Heart right ventricle (tissue), 16 donors: ENCODE measurements at regions of chr14 and their contacts with region 1.

Region 1: GRCh38 chr14:102497998-102498677 is 11.4 kb downstream of the ANKRD9 start:
- DNase-seq: peak in 1 of 2 donors; percentile 36
- ATAC-seq: peak in 2 of 8 donors; percentile 1 to 15
- H3K4me3 ChIP-seq: no peak overlapping the region
- H3K27ac ChIP-seq: peak overlapping the region in 9 of 10 donors; percentile 26 to 96 (median 89)
- H3K4me1 ChIP-seq: peaks cover 9 to 54% (median 26%) of the 10 kb centered on the region in 9 donors
- H3K27me3 ChIP-seq: no peaks in the 10 kb centered on the region
- CTCF ChIP-seq: peak in 5 of 9 donors; percentile 13 to 36 (median 26)

Region 2: DNA sequence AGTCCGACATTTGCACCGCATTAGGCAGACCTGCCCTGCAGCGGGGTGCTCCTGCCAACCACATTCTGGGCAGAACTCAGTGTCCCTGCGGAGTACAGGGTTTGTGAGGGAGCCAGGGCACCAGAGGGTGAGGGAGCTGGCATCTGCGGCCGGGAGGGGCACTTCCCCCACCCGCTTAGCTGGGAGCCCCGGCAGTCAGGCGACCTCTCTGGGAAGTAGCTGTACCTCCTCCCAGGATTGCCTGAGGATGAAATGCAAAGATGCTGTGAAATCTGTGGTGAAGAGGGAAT is 47.1 kb before region 1 on chr14:
- intact Hi-C with region 1: loop called in 1 of 10 experiments (anchors 2 kb)
- DNase-seq: peak in 1 of 2 donors; percentile 54
- ATAC-seq: peak in 7 of 8 donors; percentile 78 to 96 (median 81)
- H3K4me3 ChIP-seq: no peak overlapping the region
- H3K27ac ChIP-seq: peak overlapping the region in 9 of 10 donors; percentile 44 to 75 (median 66)
- H3K4me1 ChIP-seq: peaks cover 0 to 12% (median 0%) of the 10 kb centered on the region in 9 donors
- H3K27me3 ChIP-seq: no peaks in the 10 kb centered on the region
- CTCF ChIP-seq: no peak